B cell (primary cell): ENCODE measurements at regions of chr6 and their contacts with region 1.

Region 1: DNA sequence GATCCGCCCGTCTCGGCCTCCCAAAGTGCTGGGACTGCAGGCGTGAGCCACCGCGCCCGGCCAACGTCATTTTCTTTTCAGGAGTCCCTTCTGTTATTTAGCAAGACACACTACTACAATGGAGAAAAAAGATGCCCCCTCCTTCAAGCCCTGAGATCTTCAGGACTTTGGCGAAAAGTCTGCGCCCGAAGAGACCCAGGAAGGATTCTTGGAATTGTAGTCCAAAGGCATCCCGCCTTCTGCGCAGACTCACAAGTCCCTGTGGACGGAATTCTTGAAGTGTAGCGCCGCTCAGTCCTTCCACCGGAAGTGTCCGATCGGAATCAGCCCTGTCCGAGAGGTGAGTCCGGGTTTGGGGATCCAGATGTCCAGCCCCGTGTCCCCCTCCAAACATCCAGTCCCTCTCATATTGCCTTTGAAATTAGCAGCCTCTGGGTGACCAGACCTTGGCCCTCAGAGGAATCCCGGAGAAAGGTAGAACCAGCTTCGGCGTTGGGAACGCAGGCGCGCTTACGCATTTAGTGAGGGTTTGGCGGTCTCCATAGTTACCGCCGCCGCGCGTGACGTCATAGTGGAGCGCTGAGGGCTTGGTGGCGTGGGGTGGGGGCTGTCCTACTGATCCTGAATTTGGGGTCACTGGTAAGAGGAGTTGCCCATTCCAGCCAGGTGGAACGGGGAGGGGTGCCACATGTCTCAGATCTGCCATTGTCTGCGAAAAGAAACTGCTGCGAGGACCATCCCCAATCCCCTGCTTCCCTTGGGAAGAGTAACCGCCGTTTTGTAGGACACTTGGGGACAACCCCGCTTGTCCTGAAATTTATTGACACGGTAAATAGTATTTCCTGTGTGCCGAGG is 490 bp downstream of the ZNF165 start:
- DNase-seq: peak; percentile 98
- ATAC-seq: peak; percentile 67
- H3K4me3 ChIP-seq: peak overlapping the region; percentile 67 to 96 (median 88)
- H3K4me3 Mint-ChIP-seq: peak overlapping the region; percentile 92
- H3K27ac ChIP-seq: peak overlapping the region; percentile 94 to 100
- H3K27ac Mint-ChIP-seq: peak overlapping the region; percentile 98
- H3K4me1 ChIP-seq: peaks cover 10 to 22% of the 10 kb centered on the region in 2 donors
- H3K4me1 Mint-ChIP-seq: peaks cover 36% of the 10 kb centered on the region
- H3K27me3 ChIP-seq: no peaks in the 10 kb centered on the region
- H3K27me3 Mint-ChIP-seq: no peaks in the 10 kb centered on the region
- CTCF ChIP-seq: no peak

Region 2: DNA sequence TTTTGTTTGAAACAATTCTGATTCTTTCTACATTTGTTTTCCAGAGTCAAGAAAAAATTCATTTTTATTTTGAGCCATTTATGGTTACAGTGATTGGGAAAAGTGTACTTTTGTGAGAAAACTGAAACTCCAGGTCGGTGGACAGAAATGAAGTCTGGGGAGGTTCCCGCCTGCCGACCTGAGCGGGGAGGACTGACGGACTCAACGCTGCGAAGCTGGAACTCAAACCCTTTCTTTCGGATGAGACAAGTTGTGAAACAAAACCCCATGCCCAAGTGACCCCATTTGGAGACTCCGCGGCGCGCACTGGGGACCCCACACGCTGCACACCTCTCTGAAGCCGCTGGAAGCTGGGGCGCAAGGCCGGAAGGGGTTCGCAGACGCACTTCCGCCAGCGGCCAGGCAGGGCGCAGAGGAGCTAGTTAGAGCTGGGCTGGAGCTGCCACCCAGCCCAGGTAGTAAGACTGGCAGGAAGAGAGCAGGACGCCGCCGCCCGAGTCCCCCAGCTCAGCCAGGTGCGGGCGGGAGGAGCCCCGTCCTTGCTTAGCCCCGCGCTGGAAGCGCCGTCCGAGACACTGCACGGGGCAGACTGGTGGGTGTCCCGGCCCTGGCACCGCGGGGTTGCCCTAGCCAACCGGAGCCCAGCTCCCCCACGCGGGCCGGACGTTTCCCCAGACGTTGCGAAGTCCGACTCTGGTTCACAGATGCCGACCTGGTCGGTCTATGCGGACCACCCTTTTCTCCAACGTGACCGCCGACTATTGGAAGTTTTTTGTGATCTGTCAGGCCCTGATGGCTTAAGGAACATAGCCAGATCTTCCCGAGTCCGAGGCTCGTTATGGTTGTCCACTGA is 23.8 kb after region 1 on chr6:
- CTCF ChIA-PET with region 1: interaction called, 3 read pairs
- POLR2A ChIA-PET with region 1: interaction called, 5 read pairs
- intact Hi-C with region 1: loop called (anchors 1 kb)
- DNase-seq: peak; percentile 92
- ATAC-seq: peak; percentile 97
- H3K4me3 ChIP-seq: peak overlapping the region; percentile 69 to 78 (median 74)
- H3K4me3 Mint-ChIP-seq: peak overlapping the region; percentile 95
- H3K27ac ChIP-seq: peak overlapping the region; percentile 87 to 93
- H3K27ac Mint-ChIP-seq: peak overlapping the region; percentile 96
- H3K4me1 ChIP-seq: peaks cover 5 to 7% of the 10 kb centered on the region in 2 donors
- H3K4me1 Mint-ChIP-seq: peaks cover 13% of the 10 kb centered on the region
- H3K27me3 ChIP-seq: no peaks in the 10 kb centered on the region
- H3K27me3 Mint-ChIP-seq: peaks cover 4% of the 10 kb centered on the region
- CTCF ChIP-seq: peak; percentile 79